A549 (cell line): ENCODE measurements at regions of chr2 and their contacts with region 1.

Region 1: GRCh38 chr2:30165050-30165520 is 18.3 kb downstream of the YPEL5 start:
- DNase-seq: peak; percentile 96
- ATAC-seq: peak; percentile 95 to 99
- H3K4me3 ChIP-seq: no peak overlapping the region
- H3K27ac ChIP-seq: no peak overlapping the region
- H3K4me1 ChIP-seq: no peaks in the 10 kb centered on the region
- CTCF ChIP-seq: peak; percentile 100
- EP300 ChIP-seq: no peak
- POLR2A ChIP-seq: no peak
- RAD21 ChIP-seq: peak; percentile 97 to 98

Region 2: GRCh38 chr2:30178618-30179434 is 13.7 kb after region 1 on chr2:
- CTCF ChIA-PET with region 1: interaction called, 48 read pairs
- POLR2A ChIA-PET with region 1: no interaction called
- DNase-seq: peak in 1 of 2 experiments; percentile 22
- ATAC-seq: peak; percentile 61 to 68; a peak in 5 of 6 replicates
- H3K4me3 ChIP-seq: no peak overlapping the region
- H3K27ac ChIP-seq: peak overlapping the region in 1 of 2 experiments; percentile 62; a peak in 1 of 6 replicates
- H3K4me1 ChIP-seq: peaks cover 9% of the 10 kb centered on the region; the same call in 1 of the 3 replicates
- CTCF ChIP-seq: no peak
- EP300 ChIP-seq: no peak
- POLR2A ChIP-seq: no peak
- RAD21 ChIP-seq: no peak

Region 3: DNA sequence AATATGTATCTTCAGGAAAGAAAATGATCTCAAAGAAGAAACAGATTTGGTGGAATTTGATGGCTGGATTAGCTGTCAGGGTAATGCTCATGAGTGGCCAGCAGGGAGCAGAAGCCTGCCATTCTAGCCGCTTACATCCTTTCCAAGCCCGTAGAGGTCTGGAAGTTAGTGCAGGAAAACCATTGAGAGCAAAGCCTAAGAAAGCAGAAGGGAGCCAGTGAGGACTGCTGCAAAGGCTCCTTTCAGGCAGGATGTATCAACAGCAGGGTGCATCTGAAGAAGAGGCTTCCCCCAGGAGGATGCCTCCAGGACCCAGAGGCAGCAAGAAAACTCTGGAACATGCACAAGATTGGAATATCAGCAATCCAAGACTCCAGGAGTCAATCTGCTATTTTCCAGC is 43.4 kb after region 1 on chr2:
- CTCF ChIA-PET with region 1: interaction called, 149 read pairs
- POLR2A ChIA-PET with region 1: no interaction called
- DNase-seq: peak; percentile 44 to 84
- ATAC-seq: peak; percentile 91 to 97
- H3K4me3 ChIP-seq: no peak overlapping the region
- H3K27ac ChIP-seq: peak overlapping the region; percentile 35 to 67; a peak in 4 of 6 replicates
- H3K4me1 ChIP-seq: peaks cover 5% of the 10 kb centered on the region; the same call in 2 of the 3 replicates
- CTCF ChIP-seq: peak; percentile 98
- EP300 ChIP-seq: no peak
- POLR2A ChIP-seq: no peak
- RAD21 ChIP-seq: peak; percentile 99 to 100

Region 4: GRCh38 chr2:30239308-30239985 is 74.4 kb after region 1 on chr2:
- CTCF ChIA-PET with region 1: interaction called, 12 read pairs
- POLR2A ChIA-PET with region 1: interaction called, 7 read pairs
- DNase-seq: peak; percentile 87 to 89
- ATAC-seq: peak; percentile 70 to 79
- H3K4me3 ChIP-seq: no peak overlapping the region
- H3K27ac ChIP-seq: peak overlapping the region; percentile 24 to 92; a peak in 4 of 6 replicates
- H3K4me1 ChIP-seq: peaks cover 99% of the 10 kb centered on the region
- CTCF ChIP-seq: peak; percentile 83
- EP300 ChIP-seq: no peak
- POLR2A ChIP-seq: no peak
- RAD21 ChIP-seq: peak; percentile 68 to 76

Region 5: GRCh38 chr2:30691948-30692828 is 527.1 kb after region 1 on chr2:
- CTCF ChIA-PET with region 1: interaction called, 26 read pairs
- POLR2A ChIA-PET with region 1: no interaction called
- DNase-seq: peak in 1 of 2 experiments; percentile 45
- ATAC-seq: peak; percentile 75 to 84
- H3K4me3 ChIP-seq: no peak overlapping the region
- H3K27ac ChIP-seq: peak overlapping the region in 1 of 2 experiments; percentile 23; a peak in 1 of 6 replicates
- H3K4me1 ChIP-seq: no peaks in the 10 kb centered on the region
- CTCF ChIP-seq: peak; percentile 37
- EP300 ChIP-seq: no peak
- POLR2A ChIP-seq: no peak
- RAD21 ChIP-seq: peak; percentile 59 to 64

Region 6: GRCh38 chr2:31170071-31170698 is 1005.1 kb after region 1 on chr2:
- CTCF ChIA-PET with region 1: interaction called, 23 read pairs
- POLR2A ChIA-PET with region 1: no interaction called
- DNase-seq: peak; percentile 78 to 84
- ATAC-seq: peak; percentile 92 to 98
- H3K4me3 ChIP-seq: no peak overlapping the region
- H3K27ac ChIP-seq: no peak overlapping the region
- H3K4me1 ChIP-seq: no peaks in the 10 kb centered on the region
- CTCF ChIP-seq: peak; percentile 97
- EP300 ChIP-seq: no peak
- POLR2A ChIP-seq: no peak
- RAD21 ChIP-seq: peak; percentile 96 to 98